A673 (cell line): ENCODE measurements at regions of chr17 and their contacts with region 1.

Region 1: GRCh38 chr17:56478836-56479447 is 114.6 kb upstream of the NOG start:
- DNase-seq: peak; percentile 45
- H3K4me3 ChIP-seq: no peak overlapping the region
- H3K27ac ChIP-seq: no peak overlapping the region
- H3K4me1 ChIP-seq: no peaks in the 10 kb centered on the region
- H3K27me3 ChIP-seq: peaks cover 24% of the 10 kb centered on the region
- CTCF ChIP-seq: peak; percentile 70

Region 2: DNA sequence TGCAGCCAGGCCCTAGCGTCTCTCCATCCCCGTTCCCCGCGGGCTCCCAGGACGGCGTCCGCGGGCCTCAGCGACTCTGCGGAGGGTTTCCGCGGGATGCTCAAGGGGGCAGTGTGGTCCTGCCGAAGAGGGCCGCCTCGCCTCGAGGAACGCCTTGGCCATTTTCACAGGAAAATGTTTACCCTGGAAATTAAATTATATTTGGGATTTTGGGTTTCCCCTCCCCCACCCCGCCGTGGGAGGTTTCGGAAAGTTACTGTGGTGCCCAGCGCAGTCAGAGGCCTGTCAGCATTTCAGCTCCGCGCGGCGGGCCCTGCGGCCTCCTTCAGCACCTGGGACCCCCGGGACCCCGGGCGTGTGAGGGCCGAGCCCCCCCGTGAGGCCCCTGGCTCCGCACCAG is 633.6 kb before region 1 on chr17:
- CTCF ChIA-PET with region 1: no interaction called
- POLR2A ChIA-PET with region 1: no interaction called
- intact Hi-C with region 1: loop called (anchors 2 kb)
- DNase-seq: peak; percentile 71
- H3K4me3 ChIP-seq: no peak overlapping the region
- H3K27ac ChIP-seq: no peak overlapping the region
- H3K4me1 ChIP-seq: no peaks in the 10 kb centered on the region
- H3K27me3 ChIP-seq: peaks cover 51% of the 10 kb centered on the region
- CTCF ChIP-seq: peak; percentile 79

Region 3: DNA sequence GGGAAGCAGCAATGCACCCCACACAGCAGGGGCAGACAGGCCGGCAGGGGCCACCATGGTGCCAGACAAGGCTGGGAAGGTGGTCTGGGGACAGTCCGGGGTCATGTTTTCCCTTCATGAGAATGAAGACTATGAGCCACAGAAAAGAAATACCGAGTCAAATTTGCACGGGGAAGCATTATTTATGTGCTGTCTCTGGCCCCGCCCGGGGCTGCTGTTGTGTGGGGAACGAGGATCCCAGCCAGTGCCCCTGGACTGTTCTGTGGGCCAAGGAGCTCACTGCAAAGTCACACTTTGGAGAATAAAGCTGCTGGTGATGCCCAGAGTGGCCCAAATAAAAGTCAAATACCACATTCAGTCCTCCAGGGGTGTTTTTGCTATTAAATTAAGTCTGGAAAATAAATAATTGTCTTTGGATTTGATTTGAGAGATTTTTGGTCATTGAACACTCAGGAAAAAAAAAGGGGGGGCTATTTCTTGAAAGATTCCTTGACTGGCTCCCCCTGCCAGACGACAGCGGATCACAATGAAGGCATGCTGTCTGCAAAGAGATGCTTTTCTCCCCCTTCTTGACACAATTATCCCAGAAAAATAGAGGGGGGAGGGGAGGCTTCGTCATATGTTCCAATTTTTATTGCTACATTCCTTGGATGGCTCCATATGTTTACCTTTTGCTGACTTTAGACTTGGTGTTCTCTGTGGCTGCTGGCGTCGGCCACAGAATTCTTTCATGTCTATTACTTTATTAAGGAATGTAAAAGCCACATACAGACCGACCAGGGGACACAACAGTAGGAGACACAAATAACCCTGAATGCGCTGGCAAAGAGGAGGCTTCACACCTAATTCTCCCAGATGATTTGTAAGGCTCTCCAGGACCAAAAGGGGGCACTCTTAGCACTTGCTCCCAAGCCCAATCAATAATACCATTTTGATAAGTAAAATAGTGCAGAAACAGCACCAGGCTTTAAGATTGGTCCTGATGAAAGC is 352.8 kb before region 1 on chr17:
- CTCF ChIA-PET with region 1: no interaction called
- POLR2A ChIA-PET with region 1: no interaction called
- intact Hi-C with region 1: loop called (anchors 1 kb)
- DNase-seq: peak; percentile 43
- H3K4me3 ChIP-seq: no peak overlapping the region
- H3K27ac ChIP-seq: no peak overlapping the region
- H3K4me1 ChIP-seq: no peaks in the 10 kb centered on the region
- H3K27me3 ChIP-seq: peaks cover 36% of the 10 kb centered on the region
- CTCF ChIP-seq: peak; percentile 62

Region 4: GRCh38 chr17:56489980-56490379 is 11.0 kb after region 1 on chr17:
- CTCF ChIA-PET with region 1: no interaction called
- POLR2A ChIA-PET with region 1: no interaction called
- intact Hi-C with region 1: no loop called
- DNase-seq: no peak
- H3K4me3 ChIP-seq: no peak overlapping the region
- H3K27ac ChIP-seq: no peak overlapping the region
- H3K4me1 ChIP-seq: no peaks in the 10 kb centered on the region
- H3K27me3 ChIP-seq: no peaks in the 10 kb centered on the region
- CTCF ChIP-seq: no peak

Region 5: GRCh38 chr17:56833809-56834379 is 355.0 kb after region 1 on chr17 and contains the starts of genes C17orf67 and DGKE:
- CTCF ChIA-PET with region 1: no interaction called
- POLR2A ChIA-PET with region 1: no interaction called
- intact Hi-C with region 1: no loop called
- DNase-seq: peak; percentile 95
- H3K4me3 ChIP-seq: peak within 1 kb of the TSS; percentile 65
- H3K27ac ChIP-seq: peak within 1 kb of the TSS; percentile 70
- H3K4me1 ChIP-seq: peaks cover 24% of the 10 kb centered on the region
- H3K27me3 ChIP-seq: no peaks in the 10 kb centered on the region
- CTCF ChIP-seq: no peak
- total RNA-seq, gene C17orf67: 2.7 TPM in 2 replicates
- total RNA-seq, gene DGKE: 9.7 and 10.0 TPM in 2 replicates